SK-N-SH (cell line): ENCODE measurements at regions of chr7 and their contacts with region 1.

Region 1: GRCh38 chr7:120857588-120858573 is at the start of gene TSPAN12:
- DNase-seq: peak; percentile 91
- H3K4me3 ChIP-seq: peak within 1 kb of the TSS; percentile 64 to 66
- H3K27ac ChIP-seq: peak within 1 kb of the TSS in 1 of 2 experiments; percentile 15; a peak in 1 of 4 replicates
- H3K4me1 ChIP-seq: peaks cover 0 to 11% of the 10 kb centered on the region in 2 experiments; a peak in 2 of 4 replicates
- H3K27me3 ChIP-seq: peaks cover 35% of the 10 kb centered on the region
- CTCF ChIP-seq: peak; percentile 64
- EP300 ChIP-seq: no peak
- RAD21 ChIP-seq: peak; percentile 19; the same call in 1 of the 2 replicates
- polyA plus RNA-seq, gene TSPAN12: 0.21 TPM in 1 of 2 replicates, not detected in the other

Region 2: DNA sequence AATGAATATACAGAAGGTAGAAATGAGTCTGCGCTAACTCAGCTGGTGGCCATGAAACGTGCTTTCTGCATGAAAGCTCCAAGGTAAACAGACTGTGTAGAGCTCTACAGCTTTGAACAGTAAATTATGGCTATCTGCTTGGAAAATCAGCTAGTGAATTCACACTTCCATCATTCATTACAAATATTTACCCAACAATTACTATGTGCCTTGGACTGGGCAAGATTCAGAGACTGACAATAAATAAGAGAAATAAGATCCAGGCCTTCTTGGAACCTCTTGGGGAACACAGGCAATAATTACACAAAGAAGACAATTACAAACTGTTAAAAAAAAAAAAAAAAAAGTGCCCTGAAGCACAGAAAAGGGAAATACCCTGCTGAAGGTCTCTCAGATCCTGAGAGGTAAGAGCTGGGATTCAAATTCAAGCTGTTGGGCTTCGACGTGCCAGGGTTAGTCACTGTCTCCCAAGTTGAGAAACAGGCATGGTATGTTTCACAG is 15.7 kb before region 1 on chr7:
- CTCF ChIA-PET with region 1: interaction called, 24 read pairs
- POLR2A ChIA-PET with region 1: no interaction called
- DNase-seq: no peak
- H3K4me3 ChIP-seq: no peak overlapping the region
- H3K27ac ChIP-seq: no peak overlapping the region
- H3K4me1 ChIP-seq: no peaks in the 10 kb centered on the region
- H3K27me3 ChIP-seq: no peaks in the 10 kb centered on the region
- CTCF ChIP-seq: no peak
- EP300 ChIP-seq: no peak
- RAD21 ChIP-seq: no peak

Region 3: GRCh38 chr7:120877701-120878100 is 19.8 kb after region 1 on chr7:
- CTCF ChIA-PET with region 1: interaction called, 10 read pairs
- POLR2A ChIA-PET with region 1: no interaction called
- DNase-seq: no peak
- H3K4me3 ChIP-seq: no peak overlapping the region
- H3K27ac ChIP-seq: no peak overlapping the region
- H3K4me1 ChIP-seq: no peaks in the 10 kb centered on the region
- H3K27me3 ChIP-seq: peaks cover 22% of the 10 kb centered on the region; the same call in 1 of the 2 replicates
- CTCF ChIP-seq: no peak
- EP300 ChIP-seq: no peak
- RAD21 ChIP-seq: no peak

Region 4: DNA sequence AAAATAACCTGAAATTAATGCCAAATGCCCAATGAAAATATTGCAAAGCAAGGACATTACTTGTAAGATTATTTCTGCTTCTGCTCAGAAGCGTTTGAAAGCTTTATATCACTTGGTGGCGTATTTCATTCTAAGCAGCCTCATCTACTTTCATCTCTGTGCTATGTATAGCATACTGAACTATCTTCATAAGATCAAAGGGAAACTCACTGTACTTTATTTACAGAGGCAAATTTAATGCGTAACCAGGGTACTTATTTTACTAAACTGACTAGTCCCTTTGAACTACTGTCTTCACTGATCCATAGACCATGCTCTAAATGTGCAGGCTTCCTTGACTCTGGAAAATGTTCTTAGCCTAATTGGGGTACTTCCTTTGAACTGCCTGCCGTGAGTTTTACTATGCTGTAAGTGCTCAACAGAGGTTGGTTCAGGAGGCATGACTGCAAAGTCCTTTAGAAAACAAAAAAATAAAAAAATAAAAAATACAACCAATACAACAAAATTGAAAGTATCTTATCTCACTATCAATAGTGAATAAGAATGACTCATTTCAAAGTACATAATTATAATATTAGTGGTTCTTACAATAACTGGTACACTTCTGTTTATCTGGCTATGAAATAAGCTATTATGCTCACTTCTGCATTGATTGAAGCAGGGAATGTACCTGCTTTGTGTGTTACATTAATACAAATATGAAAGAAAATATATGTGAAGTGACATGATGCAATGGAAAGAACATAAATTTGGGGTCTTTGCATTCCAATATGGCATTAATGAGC is 41.0 kb after region 1 on chr7:
- CTCF ChIA-PET with region 1: no interaction called
- POLR2A ChIA-PET with region 1: no interaction called
- DNase-seq: no peak
- H3K4me3 ChIP-seq: no peak overlapping the region
- H3K27ac ChIP-seq: no peak overlapping the region
- H3K4me1 ChIP-seq: no peaks in the 10 kb centered on the region
- H3K27me3 ChIP-seq: no peaks in the 10 kb centered on the region; the same call in 1 of the 2 replicates
- CTCF ChIP-seq: no peak
- EP300 ChIP-seq: no peak
- RAD21 ChIP-seq: no peak